CD14-positive monocyte (primary cell): ENCODE measurements at regions of chr16 and their contacts with region 1.

Region 1: GRCh38 chr16:30813821-30814189 is 26.8 kb upstream of the ZNF629 start:
- DNase-seq: no peak
- H3K4me3 ChIP-seq: peak overlapping the region; percentile 46 to 83 (median 55)
- H3K4me3 Mint-ChIP-seq: peak overlapping the region; percentile 82 to 91
- H3K27ac ChIP-seq: peak overlapping the region; percentile 61 to 89
- H3K27ac Mint-ChIP-seq: peak overlapping the region; percentile 83 to 93 (median 90)
- H3K4me1 ChIP-seq: peaks cover 26 to 33% of the 10 kb centered on the region in 2 donors
- H3K4me1 Mint-ChIP-seq: peaks cover 30% of the 10 kb centered on the region
- H3K27me3 ChIP-seq: no peaks in the 10 kb centered on the region
- H3K27me3 Mint-ChIP-seq: peaks cover 0 to 2% (median 2%) of the 10 kb centered on the region in 3 donors
- CTCF ChIP-seq: no peak

Region 2: DNA sequence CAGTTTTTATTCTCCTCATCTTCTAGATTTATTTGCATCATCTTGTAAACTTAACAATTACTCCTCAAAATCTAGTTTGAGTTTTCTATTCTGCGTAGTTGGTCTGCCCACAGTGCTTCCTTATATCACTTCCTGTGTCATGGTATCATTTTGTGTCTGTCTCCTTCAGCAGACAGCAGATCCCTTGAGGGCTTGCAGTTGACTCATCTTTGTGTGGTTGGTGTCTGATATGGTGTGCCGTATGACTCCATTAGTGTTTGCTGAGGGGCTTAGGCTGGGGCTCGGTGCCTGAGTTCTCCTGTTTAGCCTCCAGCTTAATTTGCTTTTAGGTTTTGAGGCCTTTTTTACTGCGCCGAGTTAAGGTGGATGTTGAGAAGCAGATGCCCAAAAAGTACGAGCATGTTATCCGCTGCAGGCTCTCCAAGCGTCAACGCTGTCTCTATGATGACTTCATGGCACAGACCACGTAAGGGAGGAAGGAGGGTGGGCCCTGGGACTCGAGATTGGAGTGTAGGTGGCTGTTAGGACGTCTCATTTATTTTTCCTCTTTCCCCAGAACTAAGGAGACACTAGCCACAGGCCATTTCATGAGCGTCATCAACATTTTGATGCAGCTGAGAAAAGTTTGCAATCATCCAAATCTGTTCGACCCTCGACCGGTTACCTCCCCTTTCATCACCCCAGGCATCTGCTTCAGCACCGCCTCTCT is 97.9 kb before region 1 on chr16:
- intact Hi-C with region 1: loop called in 1 of 2 experiments (anchors 10 kb)
- DNase-seq: peak; percentile 88 to 95 (median 94)
- H3K4me3 ChIP-seq: peak overlapping the region in 1 of 3 experiments; percentile 16
- H3K4me3 Mint-ChIP-seq: peak overlapping the region; percentile 2 to 67
- H3K27ac ChIP-seq: peak overlapping the region; percentile 92 to 98
- H3K27ac Mint-ChIP-seq: peak overlapping the region; percentile 97 to 99 (median 99)
- H3K4me1 ChIP-seq: peaks cover 39 to 41% of the 10 kb centered on the region in 2 donors
- H3K4me1 Mint-ChIP-seq: peaks cover 33% of the 10 kb centered on the region
- H3K27me3 ChIP-seq: no peaks in the 10 kb centered on the region
- H3K27me3 Mint-ChIP-seq: peaks cover 0 to 7% (median 0%) of the 10 kb centered on the region in 3 donors
- CTCF ChIP-seq: no peak

Region 3: DNA sequence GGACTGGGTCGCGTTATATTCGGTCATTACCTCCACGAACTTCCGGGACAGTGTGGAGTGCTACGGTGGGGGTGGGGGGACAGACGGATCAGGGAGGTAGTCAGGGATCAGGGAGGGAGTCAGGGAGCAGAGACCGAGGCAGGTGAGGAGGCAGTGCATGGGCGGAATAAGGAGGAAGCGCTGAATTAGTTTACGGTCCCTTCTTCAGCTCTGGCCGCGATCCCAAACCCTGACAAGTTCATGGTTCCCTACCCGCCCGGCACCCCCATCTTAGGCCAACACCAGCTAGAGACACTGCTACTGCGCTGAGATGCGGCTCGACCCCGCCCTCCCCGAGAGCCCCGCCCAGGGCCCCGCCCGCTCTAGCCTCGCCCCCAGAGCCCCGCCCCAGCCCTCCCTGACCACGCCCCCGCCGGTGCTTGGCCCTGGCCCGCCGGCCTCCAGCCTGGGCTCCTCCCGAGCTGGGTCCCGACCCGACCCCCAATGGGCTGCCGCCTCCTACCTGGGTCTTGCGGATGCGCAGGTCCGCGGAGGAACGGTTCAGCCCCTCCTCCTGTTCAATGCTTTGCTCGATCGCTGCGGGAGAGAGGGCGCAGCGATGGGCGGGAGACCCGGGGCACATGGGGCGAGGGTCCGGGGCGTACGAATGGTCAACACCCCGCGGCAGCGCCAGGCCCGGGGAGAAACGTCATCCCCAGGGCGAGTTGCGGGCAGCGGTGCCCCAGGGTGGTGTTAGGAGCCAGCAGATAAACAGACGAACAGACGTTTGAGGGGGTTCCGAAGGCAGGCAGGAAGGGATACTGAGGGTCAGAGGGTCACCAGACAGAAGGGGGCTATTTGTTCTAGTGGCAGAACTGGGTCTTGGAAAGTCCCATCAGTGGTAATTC is 183.4 kb after region 1 on chr16:
- intact Hi-C with region 1: loop called in 1 of 2 experiments (anchors 5 kb)
- DNase-seq: peak; percentile 79 to 82 (median 80)
- H3K4me3 ChIP-seq: peak overlapping the region; percentile 53 to 83 (median 58)
- H3K4me3 Mint-ChIP-seq: peak overlapping the region; percentile 83 to 93
- H3K27ac ChIP-seq: peak overlapping the region; percentile 67 to 87
- H3K27ac Mint-ChIP-seq: peak overlapping the region; percentile 82 to 94 (median 89)
- H3K4me1 ChIP-seq: peaks cover 24 to 32% of the 10 kb centered on the region in 2 donors
- H3K4me1 Mint-ChIP-seq: peaks cover 31% of the 10 kb centered on the region
- H3K27me3 ChIP-seq: peaks cover 0 to 3% of the 10 kb centered on the region in 2 donors
- H3K27me3 Mint-ChIP-seq: peaks cover 1 to 17% (median 4%) of the 10 kb centered on the region in 3 donors
- CTCF ChIP-seq: no peak

Region 4: GRCh38 chr16:31010585-31011325 is 196.9 kb after region 1 on chr16 and contains the start of gene STX1B:
- intact Hi-C with region 1: no loop called
- DNase-seq: no peak
- H3K4me3 ChIP-seq: no peak within 1 kb of the TSS
- H3K4me3 Mint-ChIP-seq: peak within 1 kb of the TSS in 1 of 2 donors; percentile 88
- H3K27ac ChIP-seq: no peak within 1 kb of the TSS
- H3K27ac Mint-ChIP-seq: no peak within 1 kb of the TSS
- H3K4me1 ChIP-seq: no peaks in the 10 kb centered on the region
- H3K4me1 Mint-ChIP-seq: peaks cover 6% of the 10 kb centered on the region
- H3K27me3 ChIP-seq: peaks cover 10 to 35% of the 10 kb centered on the region in 2 donors
- H3K27me3 Mint-ChIP-seq: peaks cover 47 to 64% (median 59%) of the 10 kb centered on the region in 3 donors
- CTCF ChIP-seq: no peak
- polyA plus RNA-seq, gene STX1B: 1.7 TPM in 1 of 3 donors, not detected in the others